ENCODE measurements at regions of chr12 and their contacts with region 1.

Region 1: DNA sequence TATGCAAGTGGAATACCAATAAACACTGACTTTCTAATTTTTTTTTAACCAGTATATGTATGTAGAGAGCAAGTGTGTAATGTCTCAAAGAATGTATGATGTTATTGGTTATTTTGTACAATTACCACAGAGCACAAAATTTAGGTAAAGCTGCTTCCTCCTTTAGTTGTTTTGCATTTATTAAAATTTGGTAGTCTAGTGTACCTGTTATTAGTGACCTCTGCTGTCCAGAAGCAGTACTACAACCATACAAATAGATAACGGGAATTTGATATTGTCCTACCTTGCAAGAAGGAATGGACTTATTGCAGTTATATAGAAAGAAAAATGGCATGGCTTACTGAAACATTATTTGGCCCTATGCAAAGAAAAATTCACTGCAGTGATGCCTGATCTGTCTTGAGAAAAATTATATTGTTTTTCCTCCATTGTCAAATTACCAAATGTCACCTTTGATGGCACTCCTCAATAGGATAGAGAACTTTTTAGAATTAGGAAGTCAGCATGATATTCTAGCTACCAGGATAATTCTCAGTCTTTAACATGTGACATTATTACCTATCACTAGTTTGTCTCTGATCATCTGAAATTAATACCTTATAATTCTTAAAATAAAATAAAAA is 153.9 kb upstream of the RMST start:
- DNase-seq: no peak
- H3K4me3 ChIP-seq: no peak overlapping the region
- H3K27ac ChIP-seq: no peak overlapping the region
- H3K4me1 ChIP-seq: no peaks in the 10 kb centered on the region
- H3K27me3 ChIP-seq: no peaks in the 10 kb centered on the region
- CTCF ChIP-seq: peak in 2 of 3 experiments; percentile 38 to 63

Region 2: GRCh38 chr12:96578526-96579125 is 730.1 kb before region 1 on chr12:
- intact Hi-C with region 1: loop called (anchors 5 kb)
- DNase-seq: no peak
- H3K4me3 ChIP-seq: no peak overlapping the region
- H3K27ac ChIP-seq: no peak overlapping the region
- H3K4me1 ChIP-seq: no peaks in the 10 kb centered on the region
- H3K27me3 ChIP-seq: no peaks in the 10 kb centered on the region
- CTCF ChIP-seq: peak; percentile 17 to 37 (median 19)

Region 3: DNA sequence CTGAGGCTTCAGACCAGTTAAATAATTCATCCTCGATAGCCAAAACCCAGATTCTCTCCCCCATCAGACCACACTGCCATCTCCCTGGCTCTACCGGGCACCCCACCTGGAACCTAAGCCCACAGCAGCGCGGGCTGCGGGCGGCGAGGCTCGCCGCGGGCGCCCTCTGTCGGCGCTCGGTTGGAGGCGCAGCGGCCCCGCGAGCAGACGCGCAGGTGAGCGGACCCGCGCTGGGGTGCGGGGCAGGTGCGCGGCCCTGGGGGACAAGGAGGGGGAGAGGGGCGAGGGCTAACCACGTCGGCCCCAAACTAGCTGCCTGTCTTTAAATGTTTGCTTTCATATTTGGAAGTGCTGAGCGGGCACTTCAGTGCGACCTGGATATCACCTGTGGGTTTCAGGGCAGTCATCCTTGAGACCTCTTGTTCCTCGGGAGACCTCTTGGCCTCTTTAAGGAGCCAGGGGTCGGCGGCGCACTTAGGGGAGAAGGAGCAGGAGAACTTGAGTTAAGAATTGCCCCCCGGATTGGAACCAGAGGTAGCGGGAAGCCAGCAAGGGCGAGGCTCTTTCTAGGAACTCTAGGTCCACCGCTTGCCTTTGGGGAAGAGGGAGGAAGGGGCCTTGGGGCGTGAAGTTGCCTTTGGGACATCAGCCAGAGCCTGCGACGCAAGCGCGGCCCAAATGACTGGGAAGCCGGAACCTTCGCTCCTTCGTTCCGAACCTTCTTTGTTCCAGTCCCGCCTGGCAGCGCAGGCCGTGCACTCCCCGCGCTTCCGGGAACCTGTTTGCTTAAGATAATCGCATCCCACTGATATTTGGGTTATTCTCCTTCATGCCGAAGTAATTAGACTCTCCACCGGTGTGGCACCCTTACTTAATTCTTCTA is 323.0 kb before region 1 on chr12:
- intact Hi-C with region 1: loop called (anchors 1 kb)
- DNase-seq: no peak
- H3K4me3 ChIP-seq: peak overlapping the region; percentile 50 to 65
- H3K27ac ChIP-seq: no peak overlapping the region
- H3K4me1 ChIP-seq: peaks cover 0 to 4% of the 10 kb centered on the region in 2 donors
- H3K27me3 ChIP-seq: no peaks in the 10 kb centered on the region
- CTCF ChIP-seq: peak; percentile 35 to 59 (median 39)

Region 4: DNA sequence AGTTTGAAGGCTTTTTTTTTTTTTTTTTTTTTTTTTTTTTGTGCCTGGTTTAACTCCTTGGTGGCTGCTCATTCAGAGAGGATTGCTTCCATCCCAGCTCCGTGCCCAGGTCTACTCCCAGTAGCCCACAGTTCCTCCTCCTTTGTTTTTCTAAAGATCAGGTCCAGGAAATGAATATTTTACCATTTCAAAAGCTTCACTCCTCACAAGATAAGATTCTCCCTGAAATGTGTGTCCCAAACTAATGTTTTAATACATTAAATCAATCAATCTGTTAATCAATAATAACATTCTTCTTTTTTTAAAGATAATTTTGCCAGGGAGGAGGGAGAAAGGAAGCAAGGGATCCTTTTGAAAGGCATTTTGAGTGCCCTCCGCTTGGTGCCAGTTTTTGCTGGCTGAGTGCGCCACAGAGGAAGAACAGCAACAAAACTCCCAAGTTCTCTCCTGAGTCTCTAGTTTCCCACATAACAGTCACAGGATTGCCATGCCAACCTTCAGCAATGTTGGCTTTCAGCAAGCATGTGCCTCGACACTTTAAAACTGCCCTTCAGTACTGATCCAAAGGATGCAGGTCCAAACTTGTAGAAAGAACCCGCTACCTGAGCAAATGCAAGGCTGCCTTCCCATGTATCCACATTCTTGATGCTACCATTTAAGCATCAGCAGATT is 253.1 kb after region 1 on chr12:
- intact Hi-C with region 1: no loop called
- DNase-seq: no peak
- H3K4me3 ChIP-seq: no peak overlapping the region
- H3K27ac ChIP-seq: no peak overlapping the region
- H3K4me1 ChIP-seq: no peaks in the 10 kb centered on the region
- H3K27me3 ChIP-seq: no peaks in the 10 kb centered on the region
- CTCF ChIP-seq: no peak